Ovary (tissue), 10 donors: ENCODE measurements at regions of chr3 and their contacts with region 1.

Region 1: DNA sequence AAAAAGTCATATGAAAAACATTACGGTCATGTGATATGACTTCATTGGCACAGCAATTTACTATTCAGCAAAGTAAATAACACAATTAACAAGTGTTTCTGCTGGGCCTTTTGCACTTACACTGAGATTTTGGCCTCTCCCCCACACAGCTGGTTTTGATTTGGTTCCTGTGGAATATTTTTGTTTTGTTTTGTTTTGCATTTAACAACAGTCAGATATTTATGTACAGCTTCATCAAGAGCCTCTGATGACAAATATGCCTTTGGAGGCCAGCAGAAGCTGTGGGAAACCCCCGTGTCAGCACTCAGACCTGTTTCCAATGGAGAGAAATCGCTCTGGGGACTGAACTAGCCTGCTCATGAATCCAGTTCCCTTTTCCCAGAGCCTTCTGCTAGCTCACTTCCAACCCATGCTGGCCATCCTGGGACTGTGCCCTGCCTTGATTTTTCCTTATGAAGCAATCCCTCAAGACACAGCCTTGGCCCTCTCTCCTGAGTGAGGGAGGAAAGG is 161.9 kb downstream of the ATG7 start:
- DNase-seq: peak; percentile 53 to 79 (median 73)
- H3K4me3 ChIP-seq: no peak overlapping the region
- H3K27ac ChIP-seq: peak overlapping the region in 1 of 2 donors; percentile 75
- H3K4me1 ChIP-seq: peaks cover 9% of the 10 kb centered on the region
- H3K27me3 ChIP-seq: no peaks in the 10 kb centered on the region
- CTCF ChIP-seq: no peak
- EP300 ChIP-seq: no peak
- POLR2A ChIP-seq: no peak

Region 2: DNA sequence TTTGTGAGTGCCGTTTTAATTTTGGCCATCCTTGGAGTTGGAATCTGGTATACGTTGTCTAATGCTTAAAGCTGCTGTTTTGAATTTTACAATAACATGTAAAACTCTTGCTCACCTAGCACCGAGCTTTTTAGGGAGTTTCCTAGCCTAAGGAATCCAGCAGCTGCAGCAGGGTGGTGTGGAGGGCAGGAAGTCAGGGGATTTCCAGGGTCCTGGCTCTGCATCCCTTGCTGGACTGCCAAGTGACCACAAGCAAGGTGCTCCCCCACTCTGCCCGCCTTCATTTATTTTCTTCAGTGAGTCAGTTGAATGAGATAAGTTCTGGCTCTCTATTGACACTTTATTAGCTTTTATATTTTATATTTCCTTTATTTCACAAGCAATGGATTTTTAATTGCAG is 48.2 kb before region 1 on chr3:
- intact Hi-C with region 1: loop called in 1 of 4 experiments (anchors 10 kb)
- DNase-seq: no peak
- H3K4me3 ChIP-seq: no peak overlapping the region
- H3K27ac ChIP-seq: no peak overlapping the region
- H3K4me1 ChIP-seq: peaks cover 12% of the 10 kb centered on the region
- H3K27me3 ChIP-seq: no peaks in the 10 kb centered on the region
- CTCF ChIP-seq: no peak
- EP300 ChIP-seq: no peak
- POLR2A ChIP-seq: no peak

Region 3: GRCh38 chr3:11591391-11592282 is 157.6 kb after region 1 on chr3:
- intact Hi-C with region 1: loop called in 1 of 4 experiments (anchors 10 kb)
- DNase-seq: peak; percentile 47 to 65 (median 60)
- H3K4me3 ChIP-seq: no peak overlapping the region
- H3K27ac ChIP-seq: peak overlapping the region; percentile 43 to 54
- H3K4me1 ChIP-seq: peaks cover 48% of the 10 kb centered on the region
- H3K27me3 ChIP-seq: no peaks in the 10 kb centered on the region
- CTCF ChIP-seq: no peak
- EP300 ChIP-seq: no peak
- POLR2A ChIP-seq: no peak

Region 4: GRCh38 chr3:11690863-11691767 is 257.0 kb after region 1 on chr3:
- intact Hi-C with region 1: no loop called
- DNase-seq: no peak
- H3K4me3 ChIP-seq: no peak overlapping the region
- H3K27ac ChIP-seq: no peak overlapping the region
- H3K4me1 ChIP-seq: no peaks in the 10 kb centered on the region
- H3K27me3 ChIP-seq: no peaks in the 10 kb centered on the region
- CTCF ChIP-seq: no peak
- EP300 ChIP-seq: no peak
- POLR2A ChIP-seq: no peak